ENCODE measurements at regions of chr5 and their contacts with region 1.

Region 1: GRCh38 chr5:54443270-54443669 is 12.2 kb upstream of the HSPB3 start:
- DNase-seq: peak; percentile 63
- ATAC-seq: peak; percentile 67
- H3K4me3 ChIP-seq: no peak overlapping the region
- H3K27ac ChIP-seq: no peak overlapping the region
- H3K4me1 ChIP-seq: no peaks in the 10 kb centered on the region
- H3K27me3 ChIP-seq: peaks cover 15% of the 10 kb centered on the region
- CTCF ChIP-seq: peak; percentile 69
- POLR2A ChIP-seq: no peak
- RAD21 ChIP-seq: peak; percentile 73

Region 2: GRCh38 chr5:54457094-54457862 is 14.0 kb after region 1 on chr5:
- CTCF ChIA-PET with region 1: interaction called, 18 read pairs
- POLR2A ChIA-PET with region 1: no interaction called
- dilution Hi-C with region 1: no loop called
- in situ Hi-C with region 1: no loop called
- intact Hi-C with region 1: no loop called
- DNase-seq: peak; percentile 90
- ATAC-seq: peak; percentile 92
- H3K4me3 ChIP-seq: no peak overlapping the region
- H3K27ac ChIP-seq: peak overlapping the region; percentile 48; the same call in 1 of the 2 replicates
- H3K4me1 ChIP-seq: peaks cover 26% of the 10 kb centered on the region
- H3K27me3 ChIP-seq: no peaks in the 10 kb centered on the region
- CTCF ChIP-seq: no peak
- POLR2A ChIP-seq: no peak
- RAD21 ChIP-seq: no peak

Region 3: DNA sequence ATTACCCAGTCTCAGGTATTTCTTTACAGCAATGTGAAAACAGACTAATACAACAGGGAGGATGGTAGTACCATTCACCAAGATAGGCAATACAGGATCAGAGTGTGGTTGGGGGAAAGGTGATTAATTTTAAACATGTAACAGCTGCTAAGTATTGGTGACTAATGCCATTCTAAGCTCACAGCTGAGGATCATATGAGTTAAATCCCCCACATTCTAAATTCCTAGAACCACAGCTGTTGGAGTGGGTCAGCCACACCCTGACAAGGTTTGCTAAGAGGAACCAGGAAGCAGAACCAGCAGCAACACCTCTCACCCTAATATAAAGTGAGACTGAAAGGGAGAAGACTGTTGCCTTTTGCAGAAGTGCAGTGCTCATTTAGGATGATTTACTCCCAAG is 37.0 kb after region 1 on chr5:
- CTCF ChIA-PET with region 1: no interaction called
- POLR2A ChIA-PET with region 1: no interaction called
- dilution Hi-C with region 1: no loop called
- in situ Hi-C with region 1: loop called (anchors 5 kb)
- intact Hi-C with region 1: no loop called
- DNase-seq: peak; percentile 23
- ATAC-seq: no peak
- H3K4me3 ChIP-seq: no peak overlapping the region
- H3K27ac ChIP-seq: no peak overlapping the region
- H3K4me1 ChIP-seq: no peaks in the 10 kb centered on the region
- H3K27me3 ChIP-seq: peaks cover 12% of the 10 kb centered on the region
- CTCF ChIP-seq: no peak
- POLR2A ChIP-seq: no peak
- RAD21 ChIP-seq: no peak

Region 4: GRCh38 chr5:54492178-54492577 is 48.9 kb after region 1 on chr5:
- CTCF ChIA-PET with region 1: interaction called, 12 read pairs
- POLR2A ChIA-PET with region 1: no interaction called
- dilution Hi-C with region 1: no loop called
- in situ Hi-C with region 1: no loop called
- intact Hi-C with region 1: loop called (anchors 1 kb)
- DNase-seq: no peak
- ATAC-seq: no peak
- H3K4me3 ChIP-seq: no peak overlapping the region
- H3K27ac ChIP-seq: no peak overlapping the region
- H3K4me1 ChIP-seq: no peaks in the 10 kb centered on the region; the same call in 1 of the 2 replicates
- H3K27me3 ChIP-seq: peaks cover 14% of the 10 kb centered on the region; the same call in 1 of the 2 replicates
- CTCF ChIP-seq: no peak
- POLR2A ChIP-seq: no peak
- RAD21 ChIP-seq: no peak

Region 5: DNA sequence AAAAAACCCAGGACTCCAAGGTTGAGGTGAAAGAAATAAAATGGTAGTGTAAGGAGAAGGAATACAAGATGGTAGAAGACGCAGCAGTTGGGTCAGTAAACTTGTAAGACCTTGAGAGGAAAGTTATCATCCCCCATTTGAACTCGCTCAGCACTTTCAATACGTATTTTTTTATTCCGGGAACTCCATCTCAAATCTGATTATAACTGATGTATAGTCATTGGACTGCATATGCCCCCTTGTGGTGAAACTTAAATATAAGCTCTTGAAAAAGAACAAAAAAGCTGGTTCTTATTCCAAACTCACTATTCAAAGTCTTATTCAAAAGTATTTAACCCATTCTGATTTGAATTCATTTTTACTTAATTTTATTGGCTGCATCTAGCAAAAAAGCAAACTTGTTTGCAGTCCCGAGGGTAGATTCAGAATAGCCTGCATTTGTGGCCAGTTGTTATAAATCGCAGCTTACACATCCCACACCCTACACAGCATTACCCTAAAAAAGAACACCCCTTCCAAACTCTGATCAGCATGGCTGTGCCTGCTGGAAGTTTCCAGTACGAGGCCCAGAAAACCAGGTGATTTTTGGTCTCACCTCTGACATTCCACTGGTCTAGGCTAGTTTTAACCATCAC is 424.2 kb after region 1 on chr5:
- CTCF ChIA-PET with region 1: no interaction called
- POLR2A ChIA-PET with region 1: no interaction called
- dilution Hi-C with region 1: no loop called
- in situ Hi-C with region 1: no loop called
- intact Hi-C with region 1: loop called (anchors 10 kb)
- DNase-seq: peak; percentile 75
- ATAC-seq: peak; percentile 79
- H3K4me3 ChIP-seq: peak overlapping the region; percentile 24; the same call in 1 of the 2 replicates
- H3K27ac ChIP-seq: no peak overlapping the region
- H3K4me1 ChIP-seq: peaks cover 5% of the 10 kb centered on the region; the same call in 1 of the 2 replicates
- H3K27me3 ChIP-seq: peaks cover 5% of the 10 kb centered on the region; the same call in 1 of the 2 replicates
- CTCF ChIP-seq: peak; percentile 70
- POLR2A ChIP-seq: no peak
- RAD21 ChIP-seq: peak; percentile 76

Measured in IMR-90 (cell line).